MCF 10A (cell line): ENCODE measurements at regions of chr22 and their contacts with region 1.

Region 1: GRCh38 chr22:31211862-31212730 is at the start of gene LIMK2:
- DNase-seq: peak; percentile 89
- H3K4me3 Mint-ChIP-seq: peak within 1 kb of the TSS; percentile 87
- H3K27ac Mint-ChIP-seq: peak within 1 kb of the TSS; percentile 82
- H3K4me1 Mint-ChIP-seq: peaks cover 20% of the 10 kb centered on the region
- H3K27me3 Mint-ChIP-seq: no peaks in the 10 kb centered on the region
- CTCF ChIP-seq: peak; percentile 85
- total RNA-seq, gene LIMK2: 74.4 and 126 TPM in 2 replicates

Region 2: GRCh38 chr22:31160328-31160978 is 51.6 kb before region 1 on chr22:
- CTCF ChIA-PET with region 1: interaction called, 40 read pairs
- POLR2A ChIA-PET with region 1: interaction called, 8 read pairs
- intact Hi-C with region 1: loop called (anchors 2 kb)
- DNase-seq: no peak
- H3K4me3 Mint-ChIP-seq: peak overlapping the region; percentile 89
- H3K27ac Mint-ChIP-seq: peak overlapping the region; percentile 97
- H3K4me1 Mint-ChIP-seq: peaks cover 14% of the 10 kb centered on the region
- H3K27me3 Mint-ChIP-seq: no peaks in the 10 kb centered on the region
- CTCF ChIP-seq: no peak

Region 3: DNA sequence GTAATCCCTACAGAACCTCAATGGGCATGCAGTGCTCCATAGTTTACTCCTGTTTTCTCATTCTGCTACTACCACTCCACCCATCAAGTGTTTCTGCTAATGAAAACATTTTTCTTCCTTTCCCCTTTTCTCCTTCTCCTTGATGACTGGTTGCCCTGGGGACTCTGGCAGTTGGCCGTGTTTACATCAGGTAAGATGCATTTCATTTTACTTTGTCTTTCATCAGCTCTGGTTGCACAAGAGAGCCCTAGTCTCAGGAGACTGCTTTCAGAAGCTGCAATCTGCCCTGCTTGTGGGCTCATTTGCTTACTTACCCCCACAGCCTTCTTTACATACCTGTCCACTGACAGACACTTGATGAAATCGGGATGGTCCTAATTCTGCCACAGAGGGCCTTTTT is 19.6 kb before region 1 on chr22:
- CTCF ChIA-PET with region 1: interaction called, 33 read pairs
- POLR2A ChIA-PET with region 1: interaction called, 7 read pairs
- intact Hi-C with region 1: no loop called
- DNase-seq: peak; percentile 69
- H3K4me3 Mint-ChIP-seq: no peak overlapping the region
- H3K27ac Mint-ChIP-seq: peak overlapping the region; percentile 88
- H3K4me1 Mint-ChIP-seq: peaks cover 17% of the 10 kb centered on the region
- H3K27me3 Mint-ChIP-seq: no peaks in the 10 kb centered on the region
- CTCF ChIP-seq: no peak

Region 4: GRCh38 chr22:31223786-31224191 is 11.7 kb after region 1 on chr22:
- CTCF ChIA-PET with region 1: interaction called, 49 read pairs
- POLR2A ChIA-PET with region 1: interaction called, 14 read pairs
- intact Hi-C with region 1: no loop called
- DNase-seq: no peak
- H3K4me3 Mint-ChIP-seq: no peak overlapping the region
- H3K27ac Mint-ChIP-seq: no peak overlapping the region
- H3K4me1 Mint-ChIP-seq: peaks cover 4% of the 10 kb centered on the region
- H3K27me3 Mint-ChIP-seq: no peaks in the 10 kb centered on the region
- CTCF ChIP-seq: no peak

Region 5: DNA sequence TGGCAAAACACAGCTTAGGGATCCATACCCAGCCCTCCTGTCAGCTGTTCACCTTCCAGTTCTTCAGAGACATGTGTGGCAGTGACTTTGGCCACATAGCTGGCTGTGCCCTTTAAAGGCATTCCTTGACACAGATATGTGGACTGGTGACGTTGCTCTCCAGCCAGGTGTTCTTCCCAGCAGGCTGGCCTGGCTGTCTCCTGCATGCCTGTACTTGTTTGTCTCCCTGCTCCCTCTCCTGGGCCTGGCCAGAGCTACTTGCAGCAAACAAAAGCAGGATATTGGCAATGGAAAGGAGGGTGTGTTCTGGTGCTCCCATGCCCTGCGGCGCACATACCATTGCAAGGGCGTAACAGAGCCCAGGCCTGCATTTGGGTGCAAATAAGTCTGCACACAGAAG is 41.9 kb after region 1 on chr22:
- CTCF ChIA-PET with region 1: interaction called, 20 read pairs
- POLR2A ChIA-PET with region 1: interaction called, 30 read pairs
- intact Hi-C with region 1: loop called (anchors 1 kb)
- DNase-seq: peak; percentile 97
- H3K4me3 Mint-ChIP-seq: peak overlapping the region; percentile 52
- H3K27ac Mint-ChIP-seq: peak overlapping the region; percentile 94
- H3K4me1 Mint-ChIP-seq: peaks cover 26% of the 10 kb centered on the region
- H3K27me3 Mint-ChIP-seq: no peaks in the 10 kb centered on the region
- CTCF ChIP-seq: no peak

Region 6: GRCh38 chr22:31313366-31314147 is 101.5 kb after region 1 on chr22:
- CTCF ChIA-PET with region 1: interaction called, 4 read pairs
- POLR2A ChIA-PET with region 1: interaction called, 4 read pairs
- intact Hi-C with region 1: loop called (anchors 2 kb)
- DNase-seq: peak; percentile 95
- H3K4me3 Mint-ChIP-seq: no peak overlapping the region
- H3K27ac Mint-ChIP-seq: peak overlapping the region; percentile 52
- H3K4me1 Mint-ChIP-seq: peaks cover 6% of the 10 kb centered on the region
- H3K27me3 Mint-ChIP-seq: no peaks in the 10 kb centered on the region
- CTCF ChIP-seq: peak; percentile 71